A673 (cell line): ENCODE measurements at regions of chr3 and their contacts with region 1.

Region 1: GRCh38 chr3:180594631-180595558 is 7.1 kb upstream of the TTC14 start:
- DNase-seq: peak; percentile 36
- H3K4me3 ChIP-seq: no peak overlapping the region
- H3K27ac ChIP-seq: no peak overlapping the region
- H3K4me1 ChIP-seq: no peaks in the 10 kb centered on the region
- H3K27me3 ChIP-seq: no peaks in the 10 kb centered on the region
- CTCF ChIP-seq: peak; percentile 56

Region 2: GRCh38 chr3:179929091-179929529 is 665.8 kb before region 1 on chr3:
- CTCF ChIA-PET with region 1: interaction called, 3 read pairs
- POLR2A ChIA-PET with region 1: no interaction called
- intact Hi-C with region 1: loop called (anchors 2 kb)
- DNase-seq: peak; percentile 73
- H3K4me3 ChIP-seq: no peak overlapping the region
- H3K27ac ChIP-seq: no peak overlapping the region
- H3K4me1 ChIP-seq: no peaks in the 10 kb centered on the region
- H3K27me3 ChIP-seq: peaks cover 58% of the 10 kb centered on the region
- CTCF ChIP-seq: peak; percentile 87

Region 3: GRCh38 chr3:180548050-180548449 is 46.8 kb before region 1 on chr3:
- CTCF ChIA-PET with region 1: no interaction called
- POLR2A ChIA-PET with region 1: no interaction called
- intact Hi-C with region 1: no loop called
- DNase-seq: no peak
- H3K4me3 ChIP-seq: no peak overlapping the region
- H3K27ac ChIP-seq: no peak overlapping the region
- H3K4me1 ChIP-seq: no peaks in the 10 kb centered on the region
- H3K27me3 ChIP-seq: no peaks in the 10 kb centered on the region
- CTCF ChIP-seq: no peak

Region 4: DNA sequence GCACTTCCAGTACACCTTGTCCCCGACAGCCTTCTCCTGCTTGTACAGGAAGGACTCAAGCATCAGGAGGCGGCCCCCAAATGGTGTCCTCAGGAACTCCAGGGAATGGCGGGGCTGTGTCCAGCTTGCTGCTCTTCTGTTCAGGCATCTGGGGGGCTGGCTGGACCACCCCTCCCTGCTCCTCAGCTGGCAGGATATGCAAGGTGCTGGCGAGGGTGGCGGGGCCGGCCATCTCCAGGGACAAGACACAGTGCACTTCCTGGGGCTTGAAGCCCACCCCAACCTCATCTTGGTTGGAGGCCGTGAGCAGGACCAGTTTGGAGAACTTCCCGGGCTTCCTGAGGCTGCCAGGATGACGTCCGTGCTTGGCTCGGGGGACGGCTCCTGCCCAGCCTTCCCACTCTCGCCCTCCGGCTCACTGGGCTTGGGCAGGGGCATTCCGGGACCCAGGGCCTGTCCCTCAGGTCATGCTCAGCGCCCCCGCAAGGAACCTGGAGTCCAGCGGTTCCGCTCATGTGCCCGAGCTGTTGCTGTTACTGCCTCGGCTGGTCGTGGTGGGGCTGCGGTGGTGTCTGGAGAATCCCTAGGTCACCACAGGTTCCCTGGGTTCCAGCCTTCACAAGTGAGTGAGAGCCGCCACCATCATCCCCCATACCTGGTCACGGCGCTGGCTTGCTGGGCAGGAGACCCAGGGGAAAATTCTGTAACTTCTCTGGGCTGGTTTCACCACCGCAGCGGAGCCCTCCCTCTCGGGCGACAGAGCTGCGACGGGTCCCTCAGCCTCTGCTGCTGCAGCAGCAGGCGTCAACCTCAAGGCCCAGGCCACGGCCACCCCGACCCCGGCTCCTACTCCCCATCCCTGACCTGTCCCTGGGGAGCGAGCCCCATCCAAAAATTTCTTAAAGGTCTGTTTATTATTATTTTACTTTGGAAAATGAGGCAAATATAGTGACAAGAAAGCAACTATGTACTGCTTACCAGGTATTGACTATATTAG is 234.8 kb after region 1 on chr3:
- CTCF ChIA-PET with region 1: no interaction called
- POLR2A ChIA-PET with region 1: no interaction called
- intact Hi-C with region 1: no loop called
- DNase-seq: no peak
- H3K4me3 ChIP-seq: no peak overlapping the region
- H3K27ac ChIP-seq: no peak overlapping the region
- H3K4me1 ChIP-seq: no peaks in the 10 kb centered on the region
- H3K27me3 ChIP-seq: peaks cover 26% of the 10 kb centered on the region
- CTCF ChIP-seq: no peak